CD8-positive, alpha-beta T cell (primary cell): ENCODE measurements at regions of chr5 and their contacts with region 1.

Region 1: DNA sequence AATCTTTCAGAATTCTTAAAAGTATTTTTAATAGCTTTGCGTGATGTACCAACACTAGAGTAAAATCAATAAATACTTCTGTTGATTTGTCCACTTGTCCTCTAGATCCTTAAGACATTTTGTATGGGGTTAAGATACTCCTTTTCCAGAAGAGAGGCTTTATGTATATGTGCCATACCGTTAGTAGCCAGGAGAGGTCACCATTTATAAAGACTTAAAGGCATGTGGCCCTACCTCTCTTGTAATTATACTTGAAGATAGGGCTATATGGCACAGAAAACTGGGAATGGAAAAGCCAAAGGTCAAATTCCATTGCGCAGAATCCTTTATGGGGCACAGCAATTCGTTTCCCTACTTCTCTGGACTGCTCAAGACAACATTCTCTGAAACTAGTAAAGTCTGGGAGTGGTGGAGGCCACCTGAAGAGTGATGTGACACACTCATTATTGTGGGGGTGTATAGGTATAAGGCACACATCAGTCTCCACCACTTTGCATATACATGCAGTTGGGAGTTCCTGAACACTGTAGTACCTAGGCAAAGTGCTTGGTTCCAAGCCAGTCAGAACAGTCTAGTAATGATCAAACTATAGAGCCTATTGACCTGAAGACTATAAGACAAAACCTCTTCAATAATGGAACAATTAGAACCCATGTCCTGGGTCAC is 140.1 kb upstream of the FBXL17 start:
- DNase-seq: peak in 3 of 9 experiments; percentile 7 to 50 (median 36)
- ATAC-seq: peak; percentile 66
- H3K4me3 ChIP-seq: no peak overlapping the region
- H3K4me3 Mint-ChIP-seq: no peak overlapping the region
- H3K27ac ChIP-seq: no peak overlapping the region
- H3K27ac Mint-ChIP-seq: no peak overlapping the region
- H3K4me1 ChIP-seq: no peaks in the 10 kb centered on the region
- H3K4me1 Mint-ChIP-seq: no peaks in the 10 kb centered on the region
- H3K27me3 ChIP-seq: no peaks in the 10 kb centered on the region
- H3K27me3 Mint-ChIP-seq: peaks cover 11% of the 10 kb centered on the region
- CTCF ChIP-seq: peak; percentile 63

Region 2: GRCh38 chr5:108367679-108368334 is 154.2 kb before region 1 on chr5:
- CTCF ChIA-PET with region 1: no interaction called
- POLR2A ChIA-PET with region 1: no interaction called
- intact Hi-C with region 1: no loop called
- DNase-seq: no peak
- ATAC-seq: no peak
- H3K4me3 ChIP-seq: no peak overlapping the region
- H3K4me3 Mint-ChIP-seq: no peak overlapping the region
- H3K27ac ChIP-seq: no peak overlapping the region
- H3K27ac Mint-ChIP-seq: no peak overlapping the region
- H3K4me1 ChIP-seq: no peaks in the 10 kb centered on the region
- H3K4me1 Mint-ChIP-seq: peaks cover 44% of the 10 kb centered on the region
- H3K27me3 ChIP-seq: no peaks in the 10 kb centered on the region
- H3K27me3 Mint-ChIP-seq: no peaks in the 10 kb centered on the region
- CTCF ChIP-seq: no peak

Region 3: DNA sequence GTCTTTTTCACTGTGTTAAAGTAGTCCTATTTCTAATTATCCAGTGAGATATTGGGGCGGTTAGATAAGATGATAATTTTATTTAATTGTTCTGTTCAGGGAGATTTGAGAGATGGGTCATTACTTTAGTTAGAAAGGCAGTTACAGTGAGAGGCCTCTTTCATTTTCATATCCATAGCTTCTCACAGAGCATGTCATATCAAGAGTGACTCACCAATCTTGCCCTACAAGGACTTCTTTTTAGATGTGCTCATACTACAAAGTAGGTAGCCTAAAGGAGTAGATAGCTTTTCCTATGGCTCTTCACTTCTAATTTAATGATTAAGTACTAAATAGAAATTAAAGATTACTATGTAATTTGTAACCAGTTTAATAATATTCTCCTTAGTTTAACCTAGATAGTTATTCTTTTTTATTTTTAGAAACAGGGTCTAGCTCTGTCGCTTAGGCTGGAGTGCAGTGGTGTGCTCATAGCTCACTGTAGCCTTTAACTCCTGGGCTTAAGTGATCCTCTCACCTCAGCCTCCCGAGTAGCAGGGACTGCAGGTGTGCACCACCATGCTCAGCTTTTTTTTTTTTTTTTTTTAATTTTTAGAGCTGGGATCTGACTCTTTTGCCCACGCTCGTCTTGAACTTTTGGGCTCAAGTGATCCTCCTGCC is 296.8 kb after region 1 on chr5:
- CTCF ChIA-PET with region 1: no interaction called
- POLR2A ChIA-PET with region 1: no interaction called
- intact Hi-C with region 1: no loop called
- DNase-seq: no peak
- ATAC-seq: no peak
- H3K4me3 ChIP-seq: no peak overlapping the region
- H3K4me3 Mint-ChIP-seq: no peak overlapping the region
- H3K27ac ChIP-seq: no peak overlapping the region
- H3K27ac Mint-ChIP-seq: no peak overlapping the region
- H3K4me1 ChIP-seq: no peaks in the 10 kb centered on the region
- H3K4me1 Mint-ChIP-seq: no peaks in the 10 kb centered on the region
- H3K27me3 ChIP-seq: no peaks in the 10 kb centered on the region
- H3K27me3 Mint-ChIP-seq: no peaks in the 10 kb centered on the region
- CTCF ChIP-seq: no peak

Region 4: DNA sequence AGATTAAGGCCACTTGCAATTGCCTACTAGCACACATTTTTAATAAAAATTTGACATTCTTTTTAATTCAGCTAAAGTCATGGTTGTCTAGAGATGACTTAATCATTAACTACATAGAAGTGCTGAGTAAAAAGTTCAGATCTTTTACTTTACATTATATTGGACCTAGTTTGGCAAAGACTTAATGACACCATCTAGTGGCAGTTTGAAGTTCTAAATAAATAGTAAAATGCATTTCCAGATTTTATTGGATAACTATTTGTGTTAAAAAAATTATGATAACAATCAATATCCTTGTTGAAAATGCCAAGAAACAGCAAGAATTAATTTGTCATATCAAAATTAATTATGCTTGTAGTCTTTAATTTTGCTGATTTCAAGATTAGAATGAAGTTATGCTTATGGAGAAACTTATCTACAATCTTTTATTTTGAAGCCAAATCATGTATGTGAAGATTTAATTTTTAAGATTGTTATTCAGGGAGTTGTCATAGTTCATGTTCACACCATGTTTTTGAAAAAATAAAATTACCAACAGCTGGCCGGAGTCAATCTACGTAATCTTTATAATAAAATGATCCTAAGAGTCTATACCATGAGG is 957.4 kb after region 1 on chr5:
- CTCF ChIA-PET with region 1: no interaction called
- POLR2A ChIA-PET with region 1: no interaction called
- intact Hi-C with region 1: loop called (anchors 5 to 10 kb)
- DNase-seq: peak in 1 of 9 experiments; percentile 25
- ATAC-seq: no peak
- H3K4me3 ChIP-seq: no peak overlapping the region
- H3K4me3 Mint-ChIP-seq: no peak overlapping the region
- H3K27ac ChIP-seq: no peak overlapping the region
- H3K27ac Mint-ChIP-seq: no peak overlapping the region
- H3K4me1 ChIP-seq: no peaks in the 10 kb centered on the region
- H3K4me1 Mint-ChIP-seq: no peaks in the 10 kb centered on the region
- H3K27me3 ChIP-seq: no peaks in the 10 kb centered on the region
- H3K27me3 Mint-ChIP-seq: peaks cover 7% of the 10 kb centered on the region
- CTCF ChIP-seq: peak; percentile 37